Sigmoid colon (tissue), 7 donors: ENCODE measurements at regions of chr9 and their contacts with region 1.

Region 1: GRCh38 chr9:113410207-113410864 is at the starts of genes C9orf43 and POLE3:
- DNase-seq: peak; percentile 97
- H3K4me3 ChIP-seq: peak within 1 kb of the TSS; percentile 57 to 84 (median 72)
- H3K27ac ChIP-seq: peak within 1 kb of the TSS; percentile 93 to 98 (median 94)
- H3K4me1 ChIP-seq: peaks cover 0 to 24% (median 20%) of the 10 kb centered on the region in 4 donors
- H3K27me3 ChIP-seq: no peaks in the 10 kb centered on the region
- CTCF ChIP-seq: no peak
- EP300 ChIP-seq: peak in 2 of 4 donors; percentile 7 to 33
- POLR2A ChIP-seq: peak; percentile 68 to 74
- total RNA-seq, gene C9orf43: 0.36 to 0.68 (median 0.55) TPM in 3 of 4 donors, not detected in the other
- total RNA-seq, gene POLE3: 24.9 to 45.6 (median 39.1) TPM

Region 2: GRCh38 chr9:113056191-113057106 is 353.9 kb before region 1 on chr9 and contains the start of gene ZFP37:
- intact Hi-C with region 1: loop called (anchors 10 kb)
- DNase-seq: peak; percentile 98
- H3K4me3 ChIP-seq: peak within 1 kb of the TSS; percentile 64 to 76 (median 67)
- H3K27ac ChIP-seq: peak within 1 kb of the TSS; percentile 69 to 77 (median 72)
- H3K4me1 ChIP-seq: peaks cover 0 to 4% (median 0%) of the 10 kb centered on the region in 4 donors
- H3K27me3 ChIP-seq: peaks cover 7 to 19% (median 10%) of the 10 kb centered on the region in 3 donors
- CTCF ChIP-seq: no peak
- EP300 ChIP-seq: no peak
- POLR2A ChIP-seq: no peak
- total RNA-seq, gene ZFP37: 2.9 to 7.4 (median 4.4) TPM

Region 3: DNA sequence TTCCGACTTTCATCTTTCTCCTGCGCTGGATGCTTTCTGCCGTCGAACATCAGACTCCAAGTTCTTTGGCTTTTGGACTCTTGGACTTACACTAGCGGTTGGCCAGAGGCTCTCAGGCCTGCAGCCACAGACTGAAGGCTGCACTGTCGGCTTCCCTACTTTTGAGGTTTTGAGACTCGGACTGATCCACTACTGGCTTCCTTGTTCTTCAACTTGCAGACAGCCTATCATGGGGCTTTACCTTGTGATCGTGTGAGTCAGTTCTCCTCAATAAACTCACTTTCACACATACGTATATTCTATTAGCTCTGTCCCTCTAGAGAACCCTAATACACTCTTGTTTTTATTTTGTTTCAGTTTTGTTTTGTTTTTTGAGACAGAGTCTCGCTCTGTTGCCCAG is 199.5 kb before region 1 on chr9:
- intact Hi-C with region 1: no loop called
- DNase-seq: no peak
- H3K4me3 ChIP-seq: no peak overlapping the region
- H3K27ac ChIP-seq: no peak overlapping the region
- H3K4me1 ChIP-seq: no peaks in the 10 kb centered on the region
- H3K27me3 ChIP-seq: no peaks in the 10 kb centered on the region
- CTCF ChIP-seq: no peak
- EP300 ChIP-seq: no peak
- POLR2A ChIP-seq: no peak

Region 4: DNA sequence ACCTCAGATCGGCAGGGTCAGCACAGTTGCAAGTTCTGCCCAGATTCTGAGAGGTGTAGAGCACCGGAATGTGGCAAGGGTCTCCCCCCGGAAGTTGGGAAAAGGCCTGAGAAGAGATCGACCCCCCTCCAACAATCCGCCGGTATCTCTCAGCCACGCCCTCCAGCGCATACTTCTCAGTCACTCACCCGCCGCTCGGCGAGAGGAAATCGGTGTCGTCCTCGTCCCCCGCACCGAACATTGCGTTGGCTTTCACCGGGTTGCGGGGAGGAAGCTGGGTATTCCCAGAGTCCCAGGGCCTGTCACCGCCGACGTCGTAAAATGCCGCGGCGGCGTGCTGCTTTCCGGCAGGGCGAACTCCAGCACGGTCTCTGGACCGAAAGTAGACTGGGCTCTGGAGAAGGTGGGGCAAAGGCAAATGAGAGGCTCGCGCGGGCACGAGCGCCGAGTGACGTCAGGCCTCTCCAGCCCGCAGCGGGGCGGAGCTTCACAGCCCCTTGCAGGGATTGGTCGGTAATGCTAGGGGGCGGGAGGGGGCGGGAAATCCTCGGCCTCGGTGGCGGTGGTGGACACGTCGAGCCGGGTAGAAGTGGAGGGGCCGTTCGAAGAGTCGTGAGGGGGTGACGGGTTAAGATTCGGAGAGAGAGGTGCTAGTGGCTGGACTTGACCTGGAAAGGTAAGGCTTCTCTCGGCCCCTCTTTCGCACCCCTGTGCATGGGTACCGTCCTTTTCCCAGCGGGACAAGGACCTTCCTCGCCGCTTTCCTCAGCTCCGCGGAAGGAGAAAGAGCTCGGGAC is 189.1 kb before region 1 on chr9 and contains the starts of genes FKBP15 and SLC31A1:
- intact Hi-C with region 1: loop called (anchors 5 kb)
- DNase-seq: peak; percentile 99
- H3K4me3 ChIP-seq: peak within 1 kb of the TSS; percentile 61 to 76 (median 66)
- H3K27ac ChIP-seq: peak within 1 kb of the TSS; percentile 81 to 89 (median 87)
- H3K4me1 ChIP-seq: peaks cover 0 to 46% (median 28%) of the 10 kb centered on the region in 4 donors
- H3K27me3 ChIP-seq: no peaks in the 10 kb centered on the region
- CTCF ChIP-seq: no peak
- EP300 ChIP-seq: peak in 1 of 4 donors; percentile 53
- POLR2A ChIP-seq: peak; percentile 42 to 68
- total RNA-seq, gene FKBP15: 18.8 to 22.5 (median 20.9) TPM
- total RNA-seq, gene SLC31A1: 7.1 to 9.6 (median 8.6) TPM

Region 5: GRCh38 chr9:113427629-113428028 is 17.3 kb after region 1 on chr9:
- intact Hi-C with region 1: no loop called
- DNase-seq: no peak
- H3K4me3 ChIP-seq: no peak overlapping the region
- H3K27ac ChIP-seq: no peak overlapping the region
- H3K4me1 ChIP-seq: no peaks in the 10 kb centered on the region
- H3K27me3 ChIP-seq: no peaks in the 10 kb centered on the region
- CTCF ChIP-seq: no peak
- EP300 ChIP-seq: no peak
- POLR2A ChIP-seq: no peak

Region 6: GRCh38 chr9:113548221-113549041 is 138.1 kb after region 1 on chr9:
- intact Hi-C with region 1: no loop called
- DNase-seq: peak; percentile 77
- H3K4me3 ChIP-seq: no peak overlapping the region
- H3K27ac ChIP-seq: peak overlapping the region; percentile 35 to 70 (median 58)
- H3K4me1 ChIP-seq: peaks cover 0 to 24% (median 22%) of the 10 kb centered on the region in 4 donors
- H3K27me3 ChIP-seq: no peaks in the 10 kb centered on the region
- CTCF ChIP-seq: no peak
- EP300 ChIP-seq: no peak
- POLR2A ChIP-seq: no peak

Region 7: GRCh38 chr9:113602126-113603044 is 192.0 kb after region 1 on chr9:
- intact Hi-C with region 1: no loop called
- DNase-seq: peak; percentile 88
- H3K4me3 ChIP-seq: no peak overlapping the region
- H3K27ac ChIP-seq: peak overlapping the region; percentile 6 to 53 (median 40)
- H3K4me1 ChIP-seq: peaks cover 0 to 38% (median 24%) of the 10 kb centered on the region in 4 donors
- H3K27me3 ChIP-seq: no peaks in the 10 kb centered on the region
- CTCF ChIP-seq: no peak
- EP300 ChIP-seq: no peak
- POLR2A ChIP-seq: no peak